Dorsolateral prefrontal cortex (tissue), 120 donors: ENCODE measurements at regions of chr2 and their contacts with region 1.

Region 1: DNA sequence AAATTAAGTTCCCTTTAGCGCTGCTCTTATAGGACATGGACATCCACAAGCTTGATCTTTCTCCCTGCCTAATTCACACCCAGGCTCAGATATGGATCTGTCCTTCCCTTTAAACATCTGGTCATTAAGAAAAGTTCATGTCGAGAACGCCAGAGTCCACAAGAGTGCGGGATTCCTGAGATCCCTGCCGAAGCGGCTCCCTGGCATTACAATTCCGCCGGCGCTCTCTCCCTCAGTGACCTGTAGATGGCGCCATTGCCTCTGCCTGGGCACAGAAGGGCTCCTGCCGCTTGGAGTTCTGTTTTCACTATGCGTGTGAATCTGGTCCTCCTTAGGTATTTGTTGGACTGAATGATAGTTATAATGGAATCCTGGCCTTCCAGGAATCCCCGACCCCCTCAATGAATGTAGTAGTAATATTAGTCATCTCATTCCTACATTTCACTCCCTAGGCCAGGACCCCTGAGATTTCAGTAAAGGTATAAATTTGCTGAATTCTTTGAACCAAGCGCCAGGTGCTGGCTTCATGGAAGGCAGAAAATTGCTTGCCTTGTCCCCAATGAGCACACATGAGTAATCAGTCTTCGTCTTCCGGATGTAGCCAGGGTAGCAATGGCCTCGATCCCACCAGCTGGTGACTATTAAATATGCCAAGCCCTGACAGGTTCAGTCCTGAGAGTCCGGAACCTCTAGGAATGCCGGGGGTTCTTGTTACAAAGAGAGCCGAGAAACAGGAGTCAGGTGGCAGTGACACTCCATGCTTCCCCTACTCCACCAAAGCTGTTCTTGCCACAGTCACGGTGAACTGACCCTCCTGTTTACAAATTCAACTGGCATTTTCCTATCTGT is 26.4 kb upstream of the CD207 start:
- DNase-seq: peak; percentile 60 to 87 (median 78)
- H3K4me3 ChIP-seq: peak overlapping the region in 1 of 59 donors; percentile 31
- H3K27ac ChIP-seq: no peak overlapping the region
- H3K27me3 ChIP-seq: peaks cover 0 to 51% (median 27%) of the 10 kb centered on the region in 45 donors
- CTCF ChIP-seq: peak; percentile 55 to 98 (median 91)

Region 2: GRCh38 chr2:70664525-70664924 is 197.5 kb before region 1 on chr2:
- intact Hi-C with region 1: loop called in 1 of 2 experiments (anchors 10 kb)
- DNase-seq: no peak
- H3K4me3 ChIP-seq: no peak overlapping the region
- H3K27ac ChIP-seq: no peak overlapping the region
- H3K27me3 ChIP-seq: no peaks in the 10 kb centered on the region
- CTCF ChIP-seq: no peak

Region 3: DNA sequence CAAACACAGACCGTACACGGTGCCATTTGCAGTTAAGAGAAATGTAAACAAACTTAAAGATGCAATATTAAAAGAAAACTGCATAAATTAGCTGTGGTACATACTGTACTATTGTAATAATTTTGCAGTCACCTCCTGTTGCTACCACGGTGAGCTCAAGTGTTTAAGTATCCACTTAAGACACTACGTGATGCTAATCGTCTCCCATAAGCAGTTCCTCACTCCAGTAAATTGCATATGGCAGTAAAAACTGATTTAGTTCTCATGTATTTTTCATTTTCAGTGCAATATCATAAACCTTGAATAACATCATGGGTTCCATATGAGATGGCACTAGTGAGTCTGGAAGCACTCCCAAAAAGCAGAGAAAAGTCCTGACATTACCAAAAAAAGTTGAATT is 56.0 kb before region 1 on chr2:
- intact Hi-C with region 1: no loop called
- DNase-seq: no peak
- H3K4me3 ChIP-seq: no peak overlapping the region
- H3K27ac ChIP-seq: no peak overlapping the region
- H3K27me3 ChIP-seq: peaks cover 0 to 7% (median 0%) of the 10 kb centered on the region in 45 donors
- CTCF ChIP-seq: no peak

Region 4: GRCh38 chr2:70835643-70836042 is 26.4 kb before region 1 on chr2 and contains the start of gene CD207:
- intact Hi-C with region 1: no loop called
- DNase-seq: no peak
- H3K4me3 ChIP-seq: no peak within 1 kb of the TSS
- H3K27ac ChIP-seq: no peak within 1 kb of the TSS
- H3K27me3 ChIP-seq: peaks cover 0 to 18% (median 0%) of the 10 kb centered on the region in 45 donors
- CTCF ChIP-seq: no peak
- total RNA-seq, gene CD207: 0.25 to 1.4 (median 0.40) TPM in 24 of 120 experiments, not detected in the others